ENCODE measurements at regions of chr15 and their contacts with region 1.

Region 1: DNA sequence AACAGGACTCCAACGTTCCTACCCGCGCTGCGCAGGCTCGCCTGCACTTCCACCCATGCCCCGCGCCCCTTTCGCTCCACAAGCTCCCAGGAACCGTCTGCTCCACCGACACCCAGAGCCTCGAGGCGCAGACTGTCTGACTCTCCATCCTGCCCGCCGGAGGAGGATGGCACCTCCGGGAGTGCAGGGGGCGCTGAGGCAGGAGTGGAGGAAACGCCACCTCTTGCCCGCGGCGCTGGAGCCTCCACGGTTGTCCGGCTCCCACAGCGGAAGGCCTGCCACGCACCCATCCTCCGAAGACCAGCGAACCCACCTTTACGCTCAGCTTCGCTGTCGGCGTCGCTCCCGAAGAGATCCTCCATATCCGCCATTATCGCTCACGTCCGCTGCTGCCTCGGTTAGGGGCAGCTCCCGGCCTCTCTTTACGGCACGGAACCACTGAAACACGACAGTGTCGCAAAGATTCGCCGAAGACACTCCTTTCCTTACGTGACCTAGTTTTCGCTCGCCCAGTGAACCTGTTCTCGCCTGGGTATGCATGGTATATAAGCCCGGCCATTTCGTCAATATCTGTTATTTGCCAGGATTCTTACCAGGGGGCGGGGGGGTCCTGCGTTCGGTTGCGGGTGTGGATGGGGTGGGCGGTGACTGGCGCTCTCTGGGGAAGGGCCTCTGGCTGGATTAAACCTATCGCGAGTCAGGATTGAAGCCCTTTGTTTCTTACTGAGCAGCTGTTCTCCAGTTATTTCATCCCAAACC is at the start of gene LEO1:
- DNase-seq: peak; percentile 94
- ATAC-seq: peak; percentile 77
- H3K4me3 ChIP-seq: peak within 1 kb of the TSS; percentile 94
- H3K27ac ChIP-seq: peak within 1 kb of the TSS; percentile 70
- H3K4me1 ChIP-seq: peaks cover 15% of the 10 kb centered on the region
- H3K27me3 ChIP-seq: no peaks in the 10 kb centered on the region
- CTCF ChIP-seq: peak; percentile 54
- total RNA-seq, gene LEO1: 24.1 and 32.4 TPM in 2 replicates

Region 2: DNA sequence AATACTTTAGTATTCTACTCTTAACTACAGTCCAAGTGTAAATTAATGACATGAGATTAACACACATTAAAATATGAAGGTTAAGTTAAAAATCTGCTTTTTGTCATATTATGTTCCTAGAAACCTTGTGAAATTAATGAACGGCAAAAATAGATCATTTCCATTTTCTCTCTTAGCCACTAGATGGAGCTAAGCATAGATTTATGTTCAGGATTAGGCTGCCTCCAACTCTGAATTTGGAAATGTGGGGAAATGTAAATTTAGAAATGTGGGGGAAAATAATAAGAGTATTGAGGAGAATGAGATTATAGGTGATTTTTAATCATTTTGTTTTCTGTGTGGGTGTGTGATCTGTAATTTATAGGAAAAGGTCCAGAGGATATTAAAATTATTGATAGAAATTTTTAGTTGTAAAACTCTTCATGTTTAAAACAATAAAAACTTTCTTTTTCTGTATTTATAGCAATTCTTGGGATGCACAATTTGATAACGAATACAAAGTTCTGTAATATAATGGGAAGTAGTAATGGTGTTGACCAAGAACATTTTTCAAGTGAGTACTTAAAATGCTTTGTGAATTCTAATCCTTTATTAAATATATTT is 82.9 kb before region 1 on chr15:
- CTCF ChIA-PET with region 1: no interaction called
- POLR2A ChIA-PET with region 1: no interaction called
- intact Hi-C with region 1: no loop called
- DNase-seq: peak; percentile 57
- ATAC-seq: no peak; the same call in 1 of the 2 replicates
- H3K4me3 ChIP-seq: no peak overlapping the region
- H3K27ac ChIP-seq: 0 out of 2 replicates have a peak overlapping the region, but pooled peaks have one; percentile 12
- H3K4me1 ChIP-seq: peaks cover 17% of the 10 kb centered on the region
- H3K27me3 ChIP-seq: no peaks in the 10 kb centered on the region
- CTCF ChIP-seq: peak; percentile 83

Region 3: DNA sequence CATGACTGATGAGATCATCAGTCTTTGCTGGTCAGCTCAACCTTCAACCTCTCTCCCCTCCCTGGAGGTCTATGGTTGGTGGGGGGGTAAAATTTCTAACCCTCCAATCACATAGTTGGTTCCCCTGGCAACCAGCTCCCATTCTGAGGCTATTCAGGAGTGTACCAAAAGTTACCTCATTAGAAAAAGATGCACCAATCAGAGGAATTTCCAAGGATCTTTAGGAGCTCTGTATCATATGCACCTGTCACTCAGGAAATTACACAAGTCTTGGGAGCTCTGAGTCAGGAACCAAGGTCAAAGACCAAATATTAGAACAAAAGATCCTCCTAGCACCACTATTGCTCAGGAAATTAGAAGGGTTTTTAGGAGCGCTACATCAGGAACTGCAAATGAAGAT is 21.4 kb after region 1 on chr15:
- CTCF ChIA-PET with region 1: no interaction called
- POLR2A ChIA-PET with region 1: interaction called, 12 read pairs
- intact Hi-C with region 1: no loop called
- DNase-seq: peak; percentile 66
- ATAC-seq: peak; percentile 40
- H3K4me3 ChIP-seq: no peak overlapping the region
- H3K27ac ChIP-seq: 0 out of 2 replicates have a peak overlapping the region, but pooled peaks have one; percentile 3
- H3K4me1 ChIP-seq: peaks cover 35% of the 10 kb centered on the region
- H3K27me3 ChIP-seq: no peaks in the 10 kb centered on the region
- CTCF ChIP-seq: no peak

Region 4: GRCh38 chr15:52068004-52068615 is 96.6 kb after region 1 on chr15:
- CTCF ChIA-PET with region 1: no interaction called
- POLR2A ChIA-PET with region 1: interaction called, 20 read pairs
- intact Hi-C with region 1: no loop called
- DNase-seq: no peak
- ATAC-seq: peak; percentile 35
- H3K4me3 ChIP-seq: no peak overlapping the region
- H3K27ac ChIP-seq: no peak overlapping the region
- H3K4me1 ChIP-seq: no peaks in the 10 kb centered on the region
- H3K27me3 ChIP-seq: no peaks in the 10 kb centered on the region
- CTCF ChIP-seq: no peak

Measured in PC-3 (cell line).